Activated CD4-positive, alpha-beta memory T cell treated with anti-CD3 and anti-CD28 coated beads for 36 hours (primary cell): ENCODE measurements at regions of chr7 and their contacts with region 1.

Region 1: DNA sequence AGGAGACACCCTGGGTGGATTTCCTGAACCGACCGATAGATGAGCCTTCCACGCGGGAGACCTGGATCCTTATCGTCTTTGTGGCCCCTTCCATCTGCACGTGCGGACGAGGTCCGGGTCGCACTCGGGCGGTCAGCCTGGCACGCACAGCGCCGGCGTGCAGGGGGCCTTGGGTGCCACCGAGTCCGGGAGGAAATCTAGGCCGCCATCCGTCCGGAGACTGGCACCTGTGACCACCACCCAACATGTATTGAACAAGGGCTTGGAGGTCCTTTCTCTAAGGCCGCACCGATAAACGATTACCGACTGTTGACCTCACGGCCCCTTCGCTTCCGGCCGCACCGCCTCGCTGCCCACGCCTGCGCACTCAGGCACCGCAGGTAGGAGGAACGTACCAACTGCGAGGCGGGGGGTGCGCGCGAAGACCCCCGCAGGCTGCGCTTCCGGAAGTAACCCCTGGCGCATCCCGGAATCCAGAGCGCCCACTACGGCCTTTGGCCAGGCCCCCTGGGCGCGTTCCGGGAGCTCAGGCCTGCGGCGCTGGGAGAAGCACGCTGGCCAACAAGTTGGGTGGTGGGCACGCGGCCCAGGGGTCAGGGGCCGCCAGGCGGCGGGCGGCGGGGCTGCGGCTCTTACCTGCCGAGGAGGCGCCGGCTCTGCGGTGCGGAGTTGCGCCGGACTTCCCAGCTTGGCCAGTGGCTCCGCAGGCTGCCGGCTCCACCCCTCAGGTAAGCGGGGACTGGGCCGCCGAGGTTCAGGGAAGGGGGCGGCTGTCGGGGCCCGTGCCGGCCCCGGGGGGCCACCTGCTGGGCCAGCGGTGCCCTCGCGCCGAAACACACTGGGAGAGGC is at the starts of genes ACTR3C and LRRC61:
- DNase-seq: peak; percentile 79
- H3K4me3 Mint-ChIP-seq: peak within 1 kb of the TSS; percentile 97
- H3K27ac Mint-ChIP-seq: peak within 1 kb of the TSS; percentile 100
- H3K4me1 Mint-ChIP-seq: peaks cover 59% of the 10 kb centered on the region
- H3K27me3 Mint-ChIP-seq: no peaks in the 10 kb centered on the region
- total RNA-seq, gene ACTR3C: 8.0 to 8.8 TPM
- total RNA-seq, gene LRRC61: 26.1 to 27.1 TPM

Region 2: GRCh38 chr7:149873074-149873969 is 449.7 kb before region 1 on chr7 and contains the start of gene ATP6V0E2:
- CTCF ChIA-PET with region 1: no interaction called
- POLR2A ChIA-PET with region 1: no interaction called
- intact Hi-C with region 1: loop called (anchors 5 kb)
- DNase-seq: peak; percentile 96
- H3K4me3 Mint-ChIP-seq: peak within 1 kb of the TSS; percentile 86
- H3K27ac Mint-ChIP-seq: peak within 1 kb of the TSS; percentile 86
- H3K4me1 Mint-ChIP-seq: peaks cover 69% of the 10 kb centered on the region
- H3K27me3 Mint-ChIP-seq: no peaks in the 10 kb centered on the region
- total RNA-seq, gene ATP6V0E2: 33.5 to 34.1 TPM

Region 3: GRCh38 chr7:150368096-150368883 is 45.2 kb after region 1 on chr7 and contains the start of gene REPIN1:
- CTCF ChIA-PET with region 1: no interaction called
- POLR2A ChIA-PET with region 1: interaction called, 5 read pairs
- intact Hi-C with region 1: loop called (anchors 2 kb)
- DNase-seq: peak; percentile 88
- H3K4me3 Mint-ChIP-seq: peak within 1 kb of the TSS; percentile 95
- H3K27ac Mint-ChIP-seq: peak within 1 kb of the TSS; percentile 95
- H3K4me1 Mint-ChIP-seq: peaks cover 30% of the 10 kb centered on the region
- H3K27me3 Mint-ChIP-seq: no peaks in the 10 kb centered on the region
- total RNA-seq, gene REPIN1: 52.3 to 56.9 TPM

Region 4: GRCh38 chr7:150388709-150389531 is 65.9 kb after region 1 on chr7:
- CTCF ChIA-PET with region 1: no interaction called
- POLR2A ChIA-PET with region 1: no interaction called
- intact Hi-C with region 1: no loop called
- DNase-seq: no peak
- H3K4me3 Mint-ChIP-seq: no peak overlapping the region
- H3K27ac Mint-ChIP-seq: no peak overlapping the region
- H3K4me1 Mint-ChIP-seq: peaks cover 6% of the 10 kb centered on the region
- H3K27me3 Mint-ChIP-seq: no peaks in the 10 kb centered on the region

Region 5: DNA sequence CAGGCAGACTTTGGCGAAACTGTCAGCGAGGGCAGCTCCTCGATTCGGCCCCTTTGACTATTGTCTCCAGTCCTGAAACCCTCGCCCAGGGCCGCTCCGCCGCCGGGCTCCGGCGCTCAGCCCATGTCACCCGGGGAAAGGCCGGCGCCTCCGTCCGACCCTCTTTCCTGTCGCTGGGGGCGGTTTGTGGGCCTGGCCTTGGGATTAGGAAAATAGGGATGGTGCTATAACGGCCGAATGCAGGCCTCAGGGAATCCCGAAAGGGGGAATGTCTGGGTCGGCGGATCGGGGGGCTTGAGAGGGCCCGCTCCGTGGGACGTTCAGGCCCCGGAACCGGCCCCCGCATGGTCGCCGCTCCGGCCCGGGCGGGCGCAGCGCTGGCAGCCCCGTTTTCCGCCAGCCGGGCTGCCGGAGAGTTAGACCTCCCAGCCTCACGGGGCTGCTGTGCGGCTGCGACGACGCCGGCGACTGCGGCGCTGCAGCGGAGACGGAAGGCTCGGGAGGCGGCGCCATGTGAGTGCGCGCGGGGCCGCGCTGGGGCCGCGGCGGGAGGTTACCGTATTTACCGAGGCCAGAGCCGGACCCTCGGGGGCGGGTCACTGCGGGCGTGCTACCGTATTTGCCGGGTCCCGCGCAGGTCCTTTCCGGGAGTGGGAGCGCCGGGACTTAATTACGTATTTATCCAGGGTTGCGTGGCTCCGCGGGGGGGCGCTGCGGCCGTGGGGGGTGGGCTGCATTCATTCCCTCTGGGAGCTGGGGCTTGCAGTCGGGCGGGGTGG is 81.9 kb after region 1 on chr7:
- CTCF ChIA-PET with region 1: interaction called, 8 read pairs
- POLR2A ChIA-PET with region 1: interaction called, 4 read pairs
- intact Hi-C with region 1: loop called (anchors 1 kb)
- DNase-seq: peak; percentile 85
- H3K4me3 Mint-ChIP-seq: peak overlapping the region; percentile 86
- H3K27ac Mint-ChIP-seq: peak overlapping the region; percentile 86
- H3K4me1 Mint-ChIP-seq: peaks cover 35% of the 10 kb centered on the region
- H3K27me3 Mint-ChIP-seq: no peaks in the 10 kb centered on the region

Region 6: DNA sequence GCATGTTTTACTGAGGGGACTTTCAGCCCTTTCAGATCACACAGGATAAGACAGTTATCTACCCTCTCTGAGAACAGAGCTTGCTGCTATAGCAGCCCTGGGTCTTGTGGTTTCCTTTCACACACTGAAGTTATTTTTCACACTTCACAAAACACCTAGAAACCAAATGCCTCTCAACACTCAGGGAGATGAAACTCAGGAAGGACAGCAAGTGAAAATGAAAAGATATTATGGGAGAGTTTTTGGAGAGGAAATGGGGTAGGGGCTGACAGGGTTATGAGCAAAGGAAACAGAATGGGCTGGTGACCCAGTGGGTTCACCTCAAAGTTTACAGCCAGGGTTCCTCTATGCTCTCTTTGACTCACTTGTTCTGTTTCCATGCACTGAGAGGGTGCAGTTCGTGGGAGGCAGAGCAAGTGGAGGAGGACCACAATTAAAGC is 345.4 kb after region 1 on chr7:
- CTCF ChIA-PET with region 1: no interaction called
- POLR2A ChIA-PET with region 1: no interaction called
- intact Hi-C with region 1: loop called (anchors 5 kb)
- DNase-seq: peak; percentile 81
- H3K4me3 Mint-ChIP-seq: peak overlapping the region; percentile 18
- H3K27ac Mint-ChIP-seq: peak overlapping the region; percentile 98
- H3K4me1 Mint-ChIP-seq: peaks cover 82% of the 10 kb centered on the region
- H3K27me3 Mint-ChIP-seq: no peaks in the 10 kb centered on the region